ENCODE measurements at regions of chr10 and their contacts with region 1.

Region 1: GRCh38 chr10:59906417-59907202 is at the start of gene CCDC6:
- DNase-seq: peak; percentile 95
- total RNA-seq, gene CCDC6: 20.0 TPM

Region 2: DNA sequence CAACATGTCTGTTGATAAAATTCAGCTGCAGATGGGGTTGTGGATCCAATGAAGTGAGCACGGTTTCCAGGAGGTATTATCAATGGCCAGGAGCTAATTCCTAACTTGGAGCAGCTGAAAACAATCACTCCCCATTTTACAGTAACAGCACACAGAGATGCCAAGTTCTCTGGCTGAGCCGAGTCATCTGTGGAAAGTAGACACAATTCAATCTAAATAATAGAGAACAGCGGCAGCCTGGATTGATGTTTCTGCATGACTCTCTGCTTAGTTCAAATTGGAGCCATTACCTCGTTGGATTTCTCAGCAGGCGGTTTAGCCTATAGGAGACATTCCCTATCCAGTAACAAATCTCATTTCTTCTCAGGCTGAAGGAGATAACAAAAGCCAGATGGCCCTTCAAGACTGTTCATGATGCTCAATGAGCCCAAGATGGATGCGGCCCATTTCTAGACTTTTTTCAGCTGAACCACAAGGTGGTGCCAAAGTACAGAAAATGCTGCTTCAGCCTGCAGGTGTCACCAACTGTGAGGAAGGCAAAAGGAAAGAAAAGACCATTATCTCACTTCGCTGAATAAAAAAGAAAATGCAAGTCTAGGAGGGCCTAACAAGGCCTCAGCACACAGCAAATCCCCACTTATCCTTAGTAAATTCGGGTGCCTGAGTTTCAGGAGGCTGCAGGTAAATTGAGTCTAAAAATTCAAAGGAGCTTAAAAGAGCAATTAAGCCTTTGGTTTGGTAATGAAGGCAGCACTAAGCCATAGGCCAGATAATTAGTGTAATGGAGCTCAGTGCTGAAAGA is 280.7 kb before region 1 on chr10:
- intact Hi-C with region 1: loop called (anchors 5 kb)
- DNase-seq: no peak

Region 3: GRCh38 chr10:59808896-59809643 is 97.5 kb before region 1 on chr10:
- intact Hi-C with region 1: loop called (anchors 5 kb)
- DNase-seq: no peak

Region 4: DNA sequence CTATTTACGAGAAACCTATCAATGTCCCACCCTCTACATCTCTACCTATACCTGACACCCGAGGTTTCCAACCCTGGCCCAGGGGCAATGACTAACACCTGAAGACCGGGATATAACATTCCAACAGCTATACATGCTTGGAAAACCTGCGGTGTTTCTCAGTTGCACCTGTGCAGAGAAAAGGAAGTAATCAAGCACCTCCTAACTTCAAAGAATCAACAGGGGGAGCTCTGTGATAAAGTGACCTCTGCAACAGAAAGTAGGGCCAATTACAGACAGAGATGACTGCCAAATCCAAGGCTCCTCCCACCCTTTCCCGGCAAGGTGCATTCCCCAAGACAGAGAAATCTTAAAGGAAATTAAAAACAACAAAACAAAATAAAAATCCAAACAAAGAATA is 41.5 kb before region 1 on chr10:
- intact Hi-C with region 1: loop called (anchors 2 kb)
- DNase-seq: no peak

Region 5: DNA sequence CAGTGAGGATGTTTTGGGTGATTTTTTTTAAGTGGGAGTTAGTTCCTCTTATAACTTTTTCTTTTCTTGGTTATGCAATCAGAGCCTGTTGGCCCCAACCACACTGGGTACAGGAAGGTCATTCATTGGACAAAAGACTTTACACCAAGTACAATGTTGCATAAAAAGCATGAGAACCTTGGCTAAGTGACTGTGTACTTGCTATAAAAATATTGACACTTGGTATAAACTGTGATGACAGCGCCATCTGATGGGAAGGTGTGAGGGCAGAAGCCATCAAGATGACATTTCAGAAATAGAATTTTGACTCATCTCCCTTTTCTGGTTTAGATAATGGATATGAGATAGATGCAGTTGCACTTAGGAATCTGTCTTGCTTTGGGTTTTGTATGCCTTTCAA is 126.1 kb after region 1 on chr10:
- intact Hi-C with region 1: loop called (anchors 5 kb)
- DNase-seq: no peak

Measured in cardiac septum (tissue), 1 donor.